Activated B cell treated with CpG ODN at 0.5 μM for 24 hours (primary cell): ENCODE measurements at regions of chr1 and their contacts with region 1.

Region 1: GRCh38 chr1:178020968-178021640 is 51.2 kb upstream of the SEC16B start:
- DNase-seq: no peak
- ATAC-seq: no peak
- H3K4me3 Mint-ChIP-seq: no peak overlapping the region
- H3K27ac Mint-ChIP-seq: no peak overlapping the region
- H3K4me1 Mint-ChIP-seq: no peaks in the 10 kb centered on the region
- H3K27me3 Mint-ChIP-seq: peaks cover 14% of the 10 kb centered on the region
- CTCF ChIP-seq: no peak

Region 2: GRCh38 chr1:178004926-178005391 is 16.1 kb before region 1 on chr1:
- CTCF ChIA-PET with region 1: no interaction called
- POLR2A ChIA-PET with region 1: no interaction called
- intact Hi-C with region 1: no loop called
- DNase-seq: no peak
- ATAC-seq: no peak
- H3K4me3 Mint-ChIP-seq: no peak overlapping the region
- H3K27ac Mint-ChIP-seq: no peak overlapping the region
- H3K4me1 Mint-ChIP-seq: no peaks in the 10 kb centered on the region
- H3K27me3 Mint-ChIP-seq: peaks cover 9% of the 10 kb centered on the region
- CTCF ChIP-seq: no peak

Region 3: DNA sequence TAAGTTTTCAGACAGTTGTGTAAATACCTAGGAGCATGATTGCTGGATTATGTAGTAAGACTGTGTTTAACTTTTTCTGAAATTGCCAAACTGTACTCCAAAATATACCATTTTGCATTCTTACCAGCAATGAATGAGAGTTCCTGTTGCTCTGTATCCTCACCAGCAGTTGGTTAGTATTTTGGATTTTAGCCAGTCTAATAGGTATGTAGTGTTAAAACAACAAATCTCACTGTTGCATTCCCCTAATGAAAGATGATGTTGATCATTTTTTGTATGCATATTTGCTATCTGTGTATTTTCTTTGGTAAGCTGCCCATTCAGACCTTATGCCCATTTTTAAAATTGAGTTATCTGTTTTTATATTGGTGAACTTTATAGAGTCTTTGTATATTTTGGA is 162.7 kb after region 1 on chr1:
- CTCF ChIA-PET with region 1: no interaction called
- POLR2A ChIA-PET with region 1: interaction called, 11 read pairs
- intact Hi-C with region 1: no loop called
- DNase-seq: no peak
- ATAC-seq: no peak
- H3K4me3 Mint-ChIP-seq: no peak overlapping the region
- H3K27ac Mint-ChIP-seq: no peak overlapping the region
- H3K4me1 Mint-ChIP-seq: no peaks in the 10 kb centered on the region
- H3K27me3 Mint-ChIP-seq: peaks cover 16% of the 10 kb centered on the region
- CTCF ChIP-seq: no peak